ENCODE measurements at regions of chr16 and their contacts with region 1.

Region 1: GRCh38 chr16:88785106-88785924 is at the start of gene PIEZO1:
- DNase-seq: peak; percentile 73 to 91 (median 85)
- ATAC-seq: peak; percentile 72 to 73
- H3K4me3 Mint-ChIP-seq: peak within 1 kb of the TSS; percentile 61 to 89 (median 75)
- H3K27ac Mint-ChIP-seq: peak within 1 kb of the TSS in 6 of 10 donors; percentile 29 to 84 (median 72)
- H3K4me1 Mint-ChIP-seq: peaks cover 20 to 52% (median 47%) of the 10 kb centered on the region in 4 donors
- H3K27me3 Mint-ChIP-seq: no peaks in the 10 kb centered on the region
- polyA plus RNA-seq, gene PIEZO1: 2.4 to 8.4 (median 5.7) TPM

Region 2: GRCh38 chr16:88737298-88738150 is 47.8 kb before region 1 on chr16:
- POLR2A ChIA-PET with region 1: interaction called, 81 read pairs
- DNase-seq: peak; percentile 56 to 90 (median 72)
- ATAC-seq: peak; percentile 93 to 98
- H3K4me3 Mint-ChIP-seq: no peak overlapping the region
- H3K27ac Mint-ChIP-seq: no peak overlapping the region
- H3K4me1 Mint-ChIP-seq: peaks cover 0 to 3% (median under 1%) of the 10 kb centered on the region in 4 donors
- H3K27me3 Mint-ChIP-seq: no peaks in the 10 kb centered on the region

Region 3: GRCh38 chr16:88770461-88771293 is 14.6 kb before region 1 on chr16:
- POLR2A ChIA-PET with region 1: interaction called, 51 read pairs
- DNase-seq: peak; percentile 35 to 77 (median 48)
- ATAC-seq: peak; percentile 95
- H3K4me3 Mint-ChIP-seq: peak overlapping the region; percentile 36 to 68 (median 58)
- H3K27ac Mint-ChIP-seq: peak overlapping the region; percentile 66 to 91 (median 84)
- H3K4me1 Mint-ChIP-seq: peaks cover 8 to 39% (median 35%) of the 10 kb centered on the region in 4 donors
- H3K27me3 Mint-ChIP-seq: no peaks in the 10 kb centered on the region

Region 4: DNA sequence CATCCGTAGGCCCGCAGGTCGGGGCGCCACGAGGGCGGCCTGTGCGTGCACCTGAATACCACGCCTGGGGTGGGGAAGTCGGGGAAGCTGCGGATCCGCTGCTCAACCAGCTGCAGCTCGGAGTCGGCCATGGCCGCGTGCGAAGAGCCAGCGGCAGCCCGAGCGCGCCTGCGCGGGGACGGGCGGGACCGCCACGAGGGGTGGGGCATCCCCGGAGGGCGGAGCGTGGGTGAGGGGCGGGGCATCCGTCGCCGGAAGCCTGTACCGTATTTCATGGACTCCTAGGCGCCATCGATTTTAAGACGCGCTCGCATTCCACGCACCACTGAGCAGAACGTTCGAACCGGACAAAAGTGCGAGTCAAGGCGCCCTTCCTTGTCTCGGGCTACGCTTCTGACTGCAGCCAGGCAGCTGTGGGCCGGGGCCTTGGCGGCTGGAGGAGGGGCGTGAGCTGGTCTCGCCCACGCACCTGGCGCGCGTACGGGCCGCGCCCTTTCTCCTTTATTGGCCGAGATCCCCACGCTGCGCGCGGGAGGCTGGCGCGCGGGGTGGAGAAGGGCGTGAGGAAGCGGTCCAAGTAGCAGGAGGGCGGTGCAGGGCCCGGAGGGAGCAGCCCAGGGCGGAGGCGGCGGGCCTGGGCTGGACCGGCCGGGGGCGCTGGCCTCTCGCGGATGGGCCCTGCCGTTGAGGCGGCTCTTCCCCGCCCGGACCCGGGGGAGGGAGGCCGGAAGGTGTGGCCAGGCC is 26.6 kb after region 1 on chr16 and contains the start of gene APRT:
- POLR2A ChIA-PET with region 1: interaction called, 28 read pairs
- DNase-seq: peak; percentile 93 to 99 (median 98)
- ATAC-seq: peak; percentile 83 to 88
- H3K4me3 Mint-ChIP-seq: peak within 1 kb of the TSS; percentile 94 to 98 (median 96)
- H3K27ac Mint-ChIP-seq: peak within 1 kb of the TSS; percentile 81 to 99 (median 97)
- H3K4me1 Mint-ChIP-seq: peaks cover 3 to 26% (median 22%) of the 10 kb centered on the region in 4 donors
- H3K27me3 Mint-ChIP-seq: no peaks in the 10 kb centered on the region
- polyA plus RNA-seq, gene APRT: 428 to 492 (median 431) TPM

Measured in naive thymus-derived CD8-positive, alpha-beta T cell (primary cell).